ENCODE measurements at regions of chr16 and their contacts with region 1.

Region 1: DNA sequence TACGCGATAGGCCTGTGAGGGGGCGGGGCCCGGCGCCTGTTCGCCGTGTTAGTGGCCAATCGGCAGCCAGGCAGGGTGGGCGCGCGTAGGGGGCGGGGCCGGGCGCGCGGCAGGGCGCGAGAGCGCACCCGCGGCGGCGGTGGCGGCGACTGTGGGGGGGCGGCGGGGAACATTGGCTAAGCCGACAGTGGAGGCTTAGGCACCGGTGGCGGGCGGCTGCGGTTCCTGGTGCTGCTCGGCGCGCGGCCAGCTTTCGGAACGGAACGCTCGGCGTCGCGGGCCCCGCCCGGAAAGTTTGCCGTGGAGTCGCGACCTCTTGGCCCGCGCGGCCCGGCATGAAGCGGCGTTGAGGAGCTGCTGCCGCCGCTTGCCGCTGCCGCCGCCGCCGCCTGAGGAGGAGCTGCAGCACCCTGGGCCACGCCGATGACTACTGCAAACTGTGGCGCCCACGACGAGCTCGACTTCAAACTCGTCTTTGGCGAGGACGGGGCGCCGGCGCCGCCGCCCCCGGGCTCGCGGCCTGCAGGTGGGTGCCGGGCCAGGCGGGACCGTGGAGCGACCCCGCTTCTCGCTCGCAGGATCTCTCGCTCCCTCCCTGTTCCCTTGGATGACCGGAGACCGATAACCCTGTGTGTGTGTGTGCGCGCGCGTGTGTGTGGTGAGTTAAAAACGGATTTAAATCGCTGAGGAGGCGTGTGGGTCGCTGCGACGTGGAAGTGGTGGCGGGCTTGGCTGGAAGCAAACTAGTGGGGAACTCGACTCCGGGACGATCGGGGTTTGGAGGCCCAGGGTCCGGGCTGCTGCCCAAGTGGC is at the start of gene NFATC3:
- DNase-seq: peak; percentile 95

Region 2: DNA sequence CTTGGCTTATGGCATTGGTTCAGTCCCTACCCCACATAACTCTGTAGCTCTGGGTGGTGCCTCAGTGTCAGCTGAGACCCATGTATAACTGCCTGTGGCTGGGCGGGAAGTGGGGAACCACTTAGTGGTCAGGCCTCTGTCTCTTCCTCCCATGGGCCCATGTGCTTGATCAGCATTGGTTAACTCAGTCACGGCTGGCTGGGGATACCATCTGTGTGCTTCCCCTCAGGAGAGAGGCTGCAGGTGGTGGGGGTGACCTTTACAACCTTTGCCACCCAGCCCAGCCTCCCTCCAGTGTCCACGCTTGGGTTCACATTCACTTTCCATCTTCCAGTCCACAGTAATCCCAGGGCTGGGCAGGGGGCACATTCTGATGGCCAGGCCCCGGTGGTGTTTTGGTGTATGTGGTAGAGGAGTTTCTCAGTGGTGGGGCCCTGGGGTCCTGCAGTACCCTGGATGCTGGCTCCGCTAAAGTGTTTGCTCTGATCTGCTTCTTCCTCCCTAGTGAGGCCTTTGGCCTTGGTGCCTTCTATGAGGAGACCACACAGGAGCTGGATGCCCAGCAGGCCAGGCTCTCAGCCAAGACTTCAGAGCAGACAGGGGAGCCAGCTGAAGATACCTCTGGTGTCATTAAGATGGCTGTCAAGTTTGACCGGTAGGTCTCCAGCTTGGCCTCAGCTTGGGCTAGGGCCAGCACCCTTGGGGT is 10.5 kb before region 1 on chr16:
- CTCF ChIA-PET with region 1: no interaction called
- POLR2A ChIA-PET with region 1: interaction called, 27 read pairs
- DNase-seq: no peak

Region 3: GRCh38 chr16:68227183-68227793 is 141.8 kb after region 1 on chr16:
- CTCF ChIA-PET with region 1: interaction called, 3 read pairs
- POLR2A ChIA-PET with region 1: interaction called, 22 read pairs
- DNase-seq: no peak

Region 4: DNA sequence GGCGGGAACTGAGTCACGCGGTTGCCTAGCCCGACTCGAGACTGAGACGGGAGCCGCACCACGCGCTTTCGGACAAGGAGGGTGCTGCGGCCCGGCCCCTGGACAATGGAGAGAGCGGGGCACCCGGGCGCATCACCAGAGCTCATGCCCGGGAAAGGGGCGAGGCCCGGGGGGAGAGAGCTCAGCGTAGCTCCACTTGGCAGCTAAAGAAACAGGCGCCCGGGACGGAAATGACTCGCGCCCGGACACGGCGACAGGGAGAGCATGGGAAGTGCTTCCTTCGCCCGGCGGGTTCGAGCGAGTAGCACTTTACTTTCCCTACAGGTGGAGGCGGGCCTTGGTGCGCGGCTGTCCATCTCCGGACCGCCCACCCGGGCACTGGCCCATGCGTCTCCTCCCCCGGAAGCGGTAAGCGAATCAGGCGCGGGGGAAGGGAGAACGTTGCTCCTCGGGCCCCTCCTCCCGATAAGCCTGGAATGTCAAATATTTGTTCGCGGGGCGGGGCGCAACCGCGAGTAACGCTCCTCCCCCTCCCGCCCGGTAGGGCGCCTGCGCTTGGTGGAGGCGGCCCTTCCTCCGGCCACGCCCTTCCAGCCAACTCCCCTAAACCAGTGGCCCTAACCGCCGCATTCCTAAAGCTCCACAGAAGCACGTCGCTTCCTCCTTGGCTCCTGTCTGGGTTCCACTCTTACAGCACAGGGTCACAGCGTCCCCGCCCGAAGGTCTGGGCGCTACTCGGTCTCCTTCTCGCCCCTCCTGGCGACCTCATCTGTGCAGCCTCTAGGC is 152.0 kb after region 1 on chr16:
- CTCF ChIA-PET with region 1: no interaction called
- POLR2A ChIA-PET with region 1: interaction called, 23 read pairs
- DNase-seq: peak; percentile 97

Measured in HEK293T (cell line).